PC-9 (cell line): ENCODE measurements at regions of chr17 and their contacts with region 1.

Region 1: DNA sequence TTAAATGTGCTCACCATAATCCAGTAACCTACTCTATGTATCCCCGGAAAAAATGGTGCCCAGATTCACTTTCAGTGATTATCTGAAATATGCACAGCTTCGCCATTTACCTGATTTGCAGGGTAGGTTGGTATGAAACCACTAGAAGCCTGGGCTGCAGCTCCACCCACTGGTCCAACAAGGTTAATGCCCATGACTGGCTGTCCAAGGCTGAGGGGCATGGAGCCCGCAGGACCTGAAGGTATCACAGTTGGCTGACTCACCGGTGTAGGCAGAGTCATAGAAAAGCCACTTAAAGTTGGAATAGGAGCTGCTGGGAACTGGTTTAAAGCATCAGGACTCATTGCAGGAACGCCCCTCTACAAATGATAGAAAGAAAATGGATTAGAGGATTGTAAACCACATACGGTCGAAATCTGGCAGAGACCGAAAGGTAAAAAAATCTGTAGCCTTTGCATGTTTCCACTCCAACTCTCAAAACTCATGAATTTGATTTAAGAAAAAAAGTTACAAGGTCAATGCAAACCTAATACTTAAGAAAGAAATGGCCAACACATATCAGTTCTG is 38.6 kb downstream of the SYNRG start:
- DNase-seq: peak; percentile 69 to 72
- H3K4me3 ChIP-seq: no peak overlapping the region
- H3K27ac ChIP-seq: no peak overlapping the region
- H3K4me1 ChIP-seq: no peaks in the 10 kb centered on the region
- H3K27me3 ChIP-seq: no peaks in the 10 kb centered on the region
- CTCF ChIP-seq: peak; percentile 69

Region 2: GRCh38 chr17:36524428-36524876 is 1046.2 kb before region 1 on chr17:
- CTCF ChIA-PET with region 1: interaction called, 10 read pairs
- POLR2A ChIA-PET with region 1: no interaction called
- intact Hi-C with region 1: no loop called
- DNase-seq: peak; percentile 9 to 42
- H3K4me3 ChIP-seq: no peak overlapping the region
- H3K27ac ChIP-seq: no peak overlapping the region
- H3K4me1 ChIP-seq: no peaks in the 10 kb centered on the region
- H3K27me3 ChIP-seq: no peaks in the 10 kb centered on the region
- CTCF ChIP-seq: no peak

Region 3: GRCh38 chr17:37373530-37374159 is 197.0 kb before region 1 on chr17:
- CTCF ChIA-PET with region 1: interaction called, 7 read pairs
- POLR2A ChIA-PET with region 1: no interaction called
- intact Hi-C with region 1: loop called (anchors 2 kb)
- DNase-seq: peak; percentile 73
- H3K4me3 ChIP-seq: no peak overlapping the region
- H3K27ac ChIP-seq: no peak overlapping the region
- H3K4me1 ChIP-seq: no peaks in the 10 kb centered on the region
- H3K27me3 ChIP-seq: no peaks in the 10 kb centered on the region
- CTCF ChIP-seq: peak; percentile 96

Region 4: GRCh38 chr17:37598145-37598544 is 27.5 kb after region 1 on chr17:
- CTCF ChIA-PET with region 1: interaction called, 14 read pairs
- POLR2A ChIA-PET with region 1: no interaction called
- intact Hi-C with region 1: no loop called
- DNase-seq: no peak
- H3K4me3 ChIP-seq: no peak overlapping the region
- H3K27ac ChIP-seq: no peak overlapping the region
- H3K4me1 ChIP-seq: no peaks in the 10 kb centered on the region
- H3K27me3 ChIP-seq: no peaks in the 10 kb centered on the region
- CTCF ChIP-seq: no peak

Region 5: DNA sequence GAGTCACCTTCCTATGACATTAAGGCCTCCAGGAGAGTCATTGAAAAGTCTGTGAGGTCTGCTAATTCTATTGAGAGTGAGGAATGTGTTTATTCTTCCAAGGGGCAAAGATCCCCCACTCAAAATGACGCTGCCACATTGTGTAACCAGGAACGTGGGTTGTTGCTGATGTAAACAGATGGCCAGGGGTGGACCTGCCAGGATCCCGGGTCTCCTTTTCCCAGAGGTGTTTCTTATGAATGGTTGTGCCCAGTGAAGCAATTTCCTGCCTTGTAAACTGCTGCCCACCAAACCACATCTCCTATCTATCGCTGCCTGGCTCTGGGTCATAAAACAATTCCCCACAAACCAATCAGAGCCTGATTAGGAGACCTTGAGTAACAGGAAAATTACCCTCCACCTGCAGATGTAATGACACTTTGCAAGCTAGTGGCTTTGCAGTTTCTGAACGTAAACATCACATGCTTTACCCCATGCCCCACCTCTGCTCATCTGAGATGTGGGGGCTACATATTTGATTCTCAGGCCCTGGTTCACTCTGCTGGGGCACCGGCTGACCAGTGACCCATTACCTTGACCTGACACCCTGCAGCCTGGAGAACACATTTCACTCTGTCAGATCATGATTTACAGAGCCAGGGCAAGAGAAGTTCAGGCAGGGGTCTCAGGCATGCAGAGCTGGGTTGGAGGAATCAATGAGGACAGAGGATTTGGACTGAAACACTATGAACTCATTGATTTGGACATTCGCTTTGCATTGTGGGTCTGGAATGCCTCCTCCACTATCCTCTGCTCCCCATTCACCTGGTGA is 105.7 kb after region 1 on chr17:
- CTCF ChIA-PET with region 1: no interaction called
- POLR2A ChIA-PET with region 1: no interaction called
- intact Hi-C with region 1: no loop called
- DNase-seq: no peak
- H3K4me3 ChIP-seq: no peak overlapping the region
- H3K27ac ChIP-seq: no peak overlapping the region
- H3K4me1 ChIP-seq: peaks cover 13% of the 10 kb centered on the region
- H3K27me3 ChIP-seq: no peaks in the 10 kb centered on the region
- CTCF ChIP-seq: no peak

Region 6: DNA sequence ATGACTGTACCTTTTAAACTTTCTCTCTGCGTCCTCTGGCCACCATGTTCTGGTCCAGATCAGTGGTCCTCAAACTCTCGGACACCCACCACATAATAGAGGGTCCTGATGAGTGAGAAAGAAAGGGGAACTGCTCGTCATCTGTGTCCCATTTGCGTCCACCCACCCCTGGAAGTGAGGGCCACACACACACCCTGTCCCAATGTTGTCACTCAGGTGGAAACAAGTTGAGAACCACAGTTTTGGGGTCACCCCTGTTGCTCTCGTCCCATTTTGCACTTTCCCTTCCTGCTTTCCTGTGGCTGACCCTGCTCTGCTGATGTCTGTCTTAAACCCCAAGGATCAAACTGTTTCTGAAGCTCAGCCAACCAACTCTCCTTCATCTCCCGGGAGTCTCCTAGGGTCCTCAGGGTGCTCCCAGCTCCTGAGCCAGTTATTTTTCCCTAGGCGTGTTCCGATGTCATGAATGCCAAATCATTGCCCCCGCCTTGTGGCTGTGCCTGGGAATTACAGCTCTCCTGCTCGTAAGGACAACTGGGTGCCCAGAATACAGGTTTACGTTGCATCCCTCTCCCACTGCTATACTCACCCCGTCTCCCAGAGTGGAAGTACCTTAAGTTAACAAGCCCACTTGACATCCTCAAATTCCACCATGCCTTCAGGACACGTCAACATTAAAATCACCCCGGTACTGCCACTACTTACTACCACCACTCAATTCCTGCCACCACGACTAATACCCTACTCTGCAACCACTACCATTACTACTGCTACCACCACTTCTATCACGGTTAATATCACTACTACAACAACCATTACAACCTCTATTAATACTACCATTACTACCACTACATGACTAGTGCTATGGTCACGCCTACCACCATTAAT is 200.3 kb after region 1 on chr17:
- CTCF ChIA-PET with region 1: interaction called, 14 read pairs
- POLR2A ChIA-PET with region 1: no interaction called
- intact Hi-C with region 1: no loop called
- DNase-seq: peak; percentile 37 to 56
- H3K4me3 ChIP-seq: no peak overlapping the region
- H3K27ac ChIP-seq: no peak overlapping the region
- H3K4me1 ChIP-seq: no peaks in the 10 kb centered on the region
- H3K27me3 ChIP-seq: no peaks in the 10 kb centered on the region
- CTCF ChIP-seq: peak; percentile 88

Region 7: DNA sequence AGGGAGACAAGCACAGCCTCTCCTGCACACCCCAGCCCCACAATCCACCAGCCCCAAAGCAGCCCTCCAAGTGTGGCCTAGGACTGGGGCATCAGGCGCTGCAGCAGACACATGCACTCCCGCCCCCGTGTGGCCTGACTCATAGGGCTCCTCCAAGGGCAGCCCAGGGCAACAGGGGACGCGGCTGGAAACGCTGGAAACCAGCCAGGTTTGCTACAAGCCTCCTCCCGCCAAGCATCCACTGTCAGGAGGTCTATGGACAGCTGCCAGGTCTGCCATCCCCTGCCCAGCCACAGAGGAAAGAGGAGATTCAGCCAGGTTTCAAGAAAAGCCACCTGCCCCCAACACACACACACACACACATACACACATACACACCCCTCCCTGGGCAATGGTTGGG is 1009.3 kb after region 1 on chr17:
- CTCF ChIA-PET with region 1: no interaction called
- POLR2A ChIA-PET with region 1: no interaction called
- intact Hi-C with region 1: no loop called
- DNase-seq: peak in 1 of 2 experiments; percentile 43
- H3K4me3 ChIP-seq: no peak overlapping the region
- H3K27ac ChIP-seq: no peak overlapping the region
- H3K4me1 ChIP-seq: peaks cover 41% of the 10 kb centered on the region
- H3K27me3 ChIP-seq: no peaks in the 10 kb centered on the region
- CTCF ChIP-seq: no peak; the same call in 1 of the 2 replicates